B cell (primary cell): ENCODE measurements at regions of chr19 and their contacts with region 1.

Region 1: GRCh38 chr19:37770985-37771384 is 8.4 kb downstream of the ZNF573 start:
- DNase-seq: no peak
- ATAC-seq: no peak
- H3K4me3 ChIP-seq: no peak overlapping the region
- H3K4me3 Mint-ChIP-seq: no peak overlapping the region
- H3K27ac ChIP-seq: no peak overlapping the region
- H3K27ac Mint-ChIP-seq: no peak overlapping the region
- H3K4me1 ChIP-seq: no peaks in the 10 kb centered on the region
- H3K4me1 Mint-ChIP-seq: peaks cover 5% of the 10 kb centered on the region
- H3K27me3 ChIP-seq: no peaks in the 10 kb centered on the region
- H3K27me3 Mint-ChIP-seq: no peaks in the 10 kb centered on the region
- CTCF ChIP-seq: no peak

Region 2: GRCh38 chr19:37738371-37738770 is 32.6 kb before region 1 on chr19:
- CTCF ChIA-PET with region 1: no interaction called
- POLR2A ChIA-PET with region 1: interaction called, 10 read pairs
- intact Hi-C with region 1: no loop called
- DNase-seq: no peak
- ATAC-seq: no peak
- H3K4me3 ChIP-seq: no peak overlapping the region
- H3K4me3 Mint-ChIP-seq: no peak overlapping the region
- H3K27ac ChIP-seq: no peak overlapping the region
- H3K27ac Mint-ChIP-seq: no peak overlapping the region
- H3K4me1 ChIP-seq: no peaks in the 10 kb centered on the region
- H3K4me1 Mint-ChIP-seq: no peaks in the 10 kb centered on the region
- H3K27me3 ChIP-seq: no peaks in the 10 kb centered on the region
- H3K27me3 Mint-ChIP-seq: no peaks in the 10 kb centered on the region
- CTCF ChIP-seq: no peak